A673 (cell line): ENCODE measurements at regions of chr15 and their contacts with region 1.

Region 1: GRCh38 chr15:45118131-45118588 is 4.0 kb downstream of the DUOXA2 start:
- DNase-seq: peak; percentile 96
- H3K4me3 ChIP-seq: no peak overlapping the region
- H3K27ac ChIP-seq: no peak overlapping the region
- H3K4me1 ChIP-seq: peaks cover 10% of the 10 kb centered on the region
- H3K27me3 ChIP-seq: peaks cover 19% of the 10 kb centered on the region
- CTCF ChIP-seq: peak; percentile 100

Region 2: GRCh38 chr15:44971036-44971435 is 147.1 kb before region 1 on chr15:
- CTCF ChIA-PET with region 1: interaction called, 8 read pairs
- POLR2A ChIA-PET with region 1: no interaction called
- intact Hi-C with region 1: loop called (anchors 5 kb)
- DNase-seq: no peak
- H3K4me3 ChIP-seq: no peak overlapping the region
- H3K27ac ChIP-seq: no peak overlapping the region
- H3K4me1 ChIP-seq: no peaks in the 10 kb centered on the region
- H3K27me3 ChIP-seq: no peaks in the 10 kb centered on the region
- CTCF ChIP-seq: no peak

Region 3: GRCh38 chr15:45187894-45188830 is 70.0 kb after region 1 on chr15 and contains the start of gene SHF:
- CTCF ChIA-PET with region 1: no interaction called
- POLR2A ChIA-PET with region 1: no interaction called
- intact Hi-C with region 1: no loop called
- DNase-seq: peak; percentile 83
- H3K4me3 ChIP-seq: peak within 1 kb of the TSS; percentile 89
- H3K27ac ChIP-seq: peak within 1 kb of the TSS; percentile 84
- H3K4me1 ChIP-seq: peaks cover 31% of the 10 kb centered on the region
- H3K27me3 ChIP-seq: no peaks in the 10 kb centered on the region
- CTCF ChIP-seq: no peak
- total RNA-seq, gene SHF: 42.9 and 43.2 TPM in 2 replicates